Common myeloid progenitor, CD34-positive (primary cell): ENCODE measurements at regions of chr17 and their contacts with region 1.

Region 1: DNA sequence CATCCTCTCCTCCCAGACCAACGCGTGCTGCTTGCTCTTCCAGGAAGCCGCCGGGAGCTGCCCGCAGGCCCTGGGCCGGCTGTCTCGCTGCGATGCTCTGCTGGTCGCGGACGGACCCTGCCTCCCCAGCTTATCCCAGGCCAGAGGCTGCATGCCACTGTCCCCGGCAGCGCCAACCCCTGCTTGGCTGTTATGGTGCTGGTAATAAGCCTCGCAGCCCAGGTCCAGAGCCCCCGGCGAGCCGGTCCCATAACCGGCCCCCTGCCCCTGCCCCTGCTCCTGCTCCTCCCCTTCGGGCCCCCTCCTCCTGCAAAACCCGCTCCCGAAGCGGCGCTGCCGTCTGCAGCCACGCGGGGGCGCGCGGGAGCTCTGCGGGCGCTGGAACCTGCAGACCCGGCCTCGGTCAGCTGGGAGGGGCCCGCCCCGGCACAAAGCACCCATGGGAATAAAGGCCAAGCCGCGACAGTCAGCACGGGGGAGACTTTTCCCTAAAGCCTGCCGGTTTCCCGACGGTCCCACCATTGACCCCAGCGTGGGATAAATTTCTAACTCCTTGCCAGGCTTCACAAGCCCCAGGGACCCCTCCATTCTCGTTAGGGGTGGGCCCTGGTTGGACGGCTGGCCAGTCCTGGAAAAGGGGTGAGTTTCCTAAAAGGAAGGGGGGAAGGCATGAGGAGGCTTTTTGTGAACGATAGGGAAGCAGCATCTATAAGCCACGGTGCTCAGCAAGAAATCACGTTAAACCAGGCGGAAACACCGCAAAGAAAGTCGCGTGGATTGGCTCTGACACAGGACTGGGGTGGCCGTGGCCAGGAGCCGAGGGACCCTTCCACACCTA is 11.2 kb downstream of the ENPP7 start:
- DNase-seq: peak; percentile 57 to 67 (median 61)
- H3K4me3 ChIP-seq: peak overlapping the region in 5 of 7 experiments; percentile 19 to 73 (median 41)
- H3K27ac ChIP-seq: no peak overlapping the region
- H3K4me1 ChIP-seq: peaks cover 0 to 22% (median 16%) of the 10 kb centered on the region in 4 experiments
- H3K27me3 ChIP-seq: peaks cover 0 to 35% (median 20%) of the 10 kb centered on the region in 5 experiments

Region 2: DNA sequence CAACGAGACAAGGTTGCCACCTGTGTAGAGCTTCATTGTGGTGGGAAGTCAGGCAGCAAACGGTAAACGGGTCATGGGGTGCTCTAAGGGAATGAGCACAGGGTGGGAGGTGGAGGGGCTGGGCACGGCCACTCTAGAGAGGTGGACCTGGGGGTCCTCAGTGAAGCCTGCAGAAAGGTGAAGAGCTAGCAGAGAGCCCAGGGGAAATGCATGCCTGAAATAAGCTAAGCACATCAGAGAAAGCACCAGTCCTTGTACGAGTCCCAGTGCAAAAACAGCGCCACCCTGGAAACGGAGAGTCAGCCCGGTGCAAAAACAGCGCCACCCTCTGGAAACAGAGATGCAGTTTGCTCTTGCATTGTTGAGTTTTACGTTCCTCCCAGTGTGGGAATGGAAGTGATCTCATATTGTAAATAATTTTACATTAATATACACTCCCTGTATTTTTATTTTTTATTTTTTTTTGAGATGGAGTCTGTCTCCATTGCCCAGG is 228.7 kb after region 1 on chr17:
- CTCF ChIA-PET with region 1: interaction called, 10 read pairs
- POLR2A ChIA-PET with region 1: no interaction called
- DNase-seq: peak; percentile 78 to 84 (median 78)
- H3K4me3 ChIP-seq: no peak overlapping the region
- H3K27ac ChIP-seq: no peak overlapping the region
- H3K4me1 ChIP-seq: peaks cover 0 to 2% (median 0%) of the 10 kb centered on the region in 4 experiments
- H3K27me3 ChIP-seq: no peaks in the 10 kb centered on the region